A549 (cell line): ENCODE measurements at regions of chr12 and their contacts with region 1.

Region 1: GRCh38 chr12:99658671-99659349 is 11.3 kb downstream of the GARIN6 start:
- DNase-seq: peak in 1 of 2 experiments; percentile 30
- ATAC-seq: no peak
- H3K4me3 ChIP-seq: no peak overlapping the region
- H3K27ac ChIP-seq: no peak overlapping the region
- H3K4me1 ChIP-seq: no peaks in the 10 kb centered on the region
- CTCF ChIP-seq: peak; percentile 52
- EP300 ChIP-seq: no peak
- POLR2A ChIP-seq: no peak
- RAD21 ChIP-seq: peak; percentile 65 to 74

Region 2: DNA sequence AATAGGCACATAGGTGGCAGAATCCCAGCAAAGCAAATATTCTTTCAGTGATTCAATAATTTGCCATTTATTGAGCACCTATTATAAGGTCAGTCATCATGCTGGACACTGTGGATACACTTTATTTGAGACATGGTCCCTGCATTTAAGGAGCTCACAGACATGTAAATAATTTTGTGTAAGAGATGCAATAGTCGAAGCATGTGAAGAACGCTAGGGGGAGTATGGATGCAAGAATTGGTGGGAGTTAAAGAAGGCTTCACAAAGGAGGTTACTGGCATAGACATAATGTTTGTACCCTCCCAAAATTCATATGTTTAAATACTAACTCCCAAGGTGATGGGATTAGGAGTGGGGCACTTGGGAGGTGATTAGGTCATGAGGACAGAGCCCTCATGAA is 271.9 kb before region 1 on chr12:
- CTCF ChIA-PET with region 1: interaction called, 51 read pairs
- POLR2A ChIA-PET with region 1: no interaction called
- DNase-seq: peak; percentile 13 to 69
- ATAC-seq: peak; percentile 78 to 89
- H3K4me3 ChIP-seq: no peak overlapping the region
- H3K27ac ChIP-seq: no peak overlapping the region
- H3K4me1 ChIP-seq: no peaks in the 10 kb centered on the region
- CTCF ChIP-seq: peak; percentile 57
- EP300 ChIP-seq: no peak
- POLR2A ChIP-seq: no peak
- RAD21 ChIP-seq: peak; percentile 63 to 79

Region 3: GRCh38 chr12:99529966-99530365 is 128.8 kb before region 1 on chr12:
- CTCF ChIA-PET with region 1: no interaction called
- POLR2A ChIA-PET with region 1: no interaction called
- DNase-seq: no peak
- ATAC-seq: no peak
- H3K4me3 ChIP-seq: no peak overlapping the region
- H3K27ac ChIP-seq: no peak overlapping the region
- H3K4me1 ChIP-seq: no peaks in the 10 kb centered on the region
- CTCF ChIP-seq: no peak
- EP300 ChIP-seq: no peak
- POLR2A ChIP-seq: no peak
- RAD21 ChIP-seq: no peak